BJ (cell line): ENCODE measurements at regions of chr2 and their contacts with region 1.

Region 1: DNA sequence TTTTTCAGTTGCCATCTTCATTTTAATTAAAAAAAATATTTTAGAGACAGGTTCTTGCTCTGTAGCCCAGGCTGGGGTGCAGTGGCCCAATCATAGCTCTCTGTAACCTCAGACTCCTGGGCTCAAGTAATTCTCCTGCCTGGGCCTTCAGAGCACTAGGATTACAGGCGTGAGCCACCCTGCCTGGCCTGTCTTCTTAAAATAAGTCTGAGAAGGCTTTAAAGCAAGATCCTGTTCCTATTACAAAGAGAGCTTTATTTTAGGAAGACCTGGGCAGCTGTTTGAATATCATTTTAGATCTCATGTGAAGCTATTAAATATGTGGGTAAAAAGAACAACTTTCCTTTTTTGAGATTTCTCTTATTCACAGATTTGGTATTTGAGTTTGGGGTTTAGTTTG is 1.5 kb downstream of the FAM228A start:
- DNase-seq: no peak
- H3K4me3 ChIP-seq: no peak overlapping the region
- H3K27me3 ChIP-seq: no peaks in the 10 kb centered on the region
- CTCF ChIP-seq: no peak

Region 2: DNA sequence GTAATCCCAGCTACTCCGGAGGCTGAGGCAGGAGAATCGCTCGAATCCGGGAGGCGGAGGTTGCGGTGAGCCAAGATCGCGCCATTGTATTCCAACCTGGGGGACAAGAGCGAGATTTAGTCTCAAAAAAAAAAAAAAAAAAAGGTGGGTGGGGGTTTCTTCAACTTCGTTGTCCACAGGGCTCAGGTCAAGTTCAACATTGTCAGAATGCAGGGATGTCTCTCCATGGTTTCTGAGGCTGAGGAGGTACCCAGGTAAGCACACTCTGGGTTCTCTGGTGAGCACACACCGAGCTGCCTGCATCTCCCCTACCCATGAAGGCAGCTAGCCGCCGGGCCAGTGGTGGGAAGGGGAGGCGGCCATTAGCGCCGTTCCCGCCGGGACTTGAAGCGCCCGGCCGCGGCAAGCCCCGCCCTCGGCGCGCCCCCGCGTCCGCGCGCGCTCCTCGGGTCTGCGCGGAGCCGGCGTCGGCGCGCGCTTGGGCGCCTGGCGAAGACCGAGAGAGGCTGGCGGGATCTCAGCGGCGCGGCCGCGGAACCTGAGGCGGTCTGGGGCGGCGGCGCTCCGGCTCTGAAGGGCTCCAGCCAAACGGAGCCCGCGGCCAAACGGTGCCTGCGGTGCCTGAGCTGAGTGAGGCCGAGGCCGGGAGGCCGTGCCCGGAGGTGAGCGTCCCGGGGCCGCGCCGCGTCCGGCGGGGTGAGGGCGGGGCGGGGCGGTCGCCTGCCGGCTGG is 236.2 kb before region 1 on chr2 and contains the start of gene UBXN2A:
- CTCF ChIA-PET with region 1: no interaction called
- POLR2A ChIA-PET with region 1: no interaction called
- DNase-seq: no peak
- H3K4me3 ChIP-seq: peak within 1 kb of the TSS; percentile 87
- H3K27me3 ChIP-seq: no peaks in the 10 kb centered on the region
- CTCF ChIP-seq: no peak
- polyA plus RNA-seq, gene UBXN2A: 5.8 and 7.9 TPM in 2 replicates

Region 3: DNA sequence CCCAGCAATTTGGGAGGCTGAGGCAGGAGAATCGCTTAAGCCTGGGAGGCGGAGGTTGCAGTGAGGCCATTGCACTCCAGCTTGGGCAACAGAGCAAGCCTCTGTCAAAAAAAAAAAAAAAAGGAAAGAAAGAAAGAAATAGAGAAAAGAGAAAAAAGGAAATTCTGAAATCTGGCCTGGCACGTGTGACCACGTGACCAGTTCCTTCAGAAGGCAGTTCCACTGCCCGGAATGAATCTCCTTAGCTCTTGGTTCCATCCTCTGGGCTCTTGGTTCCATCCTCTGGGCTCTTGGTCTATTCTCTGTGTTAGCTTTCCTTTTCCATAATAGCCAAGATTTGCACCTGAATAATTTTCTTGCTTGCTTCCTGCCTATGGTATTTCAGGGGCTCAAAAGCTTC is 997.4 kb after region 1 on chr2:
- CTCF ChIA-PET with region 1: no interaction called
- POLR2A ChIA-PET with region 1: interaction called, 16 read pairs
- DNase-seq: no peak
- H3K4me3 ChIP-seq: no peak overlapping the region
- H3K27me3 ChIP-seq: peaks cover 23% of the 10 kb centered on the region
- CTCF ChIP-seq: no peak